ENCODE measurements at regions of chr11 and their contacts with region 1.

Region 1: DNA sequence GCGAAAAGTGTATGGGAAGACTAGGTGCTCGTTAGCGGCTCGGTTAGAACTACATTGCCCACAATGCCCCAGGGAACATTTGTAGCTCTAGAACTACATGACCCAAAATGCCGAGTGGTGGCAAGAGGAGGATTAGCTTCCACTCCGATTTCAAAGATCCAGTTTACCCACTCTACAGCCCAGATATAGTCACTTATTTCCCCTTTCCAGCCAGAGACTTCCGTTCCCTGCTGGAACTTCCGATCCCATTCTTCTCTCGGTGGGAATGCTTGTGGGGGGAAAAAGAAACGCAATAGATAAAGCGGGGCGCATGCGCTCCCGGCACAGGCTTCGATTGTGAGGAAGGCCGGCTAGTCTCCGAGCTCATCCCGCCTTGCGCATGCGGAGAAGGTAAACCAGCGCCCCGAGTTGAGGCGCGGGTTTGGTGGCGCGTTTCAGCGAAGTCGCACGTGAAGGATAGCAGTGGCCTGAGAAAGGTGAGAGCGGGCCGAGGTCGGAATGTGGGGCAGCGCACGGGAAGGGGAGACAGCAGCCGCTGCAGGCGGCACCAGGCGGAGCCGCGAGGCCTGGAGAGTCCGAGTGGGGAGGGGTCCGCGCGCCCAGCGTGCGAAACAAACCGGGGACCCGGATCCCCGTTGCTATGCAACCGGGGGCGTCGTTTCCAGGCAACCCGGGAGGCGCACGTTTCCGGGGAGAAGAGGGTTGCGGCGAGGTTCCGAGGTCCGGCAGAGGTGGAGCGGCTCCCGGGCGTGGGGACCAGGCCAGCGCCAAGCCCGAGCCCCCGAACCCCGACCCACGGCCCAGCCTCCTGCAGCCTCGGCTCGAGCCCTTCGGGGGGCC is at the start of gene TMEM109:
- DNase-seq: peak; percentile 80
- ATAC-seq: peak; percentile 54
- H3K4me3 Mint-ChIP-seq: peak within 1 kb of the TSS; percentile 98
- H3K27ac Mint-ChIP-seq: peak within 1 kb of the TSS; percentile 99
- H3K4me1 Mint-ChIP-seq: peaks cover 87% of the 10 kb centered on the region
- H3K27me3 Mint-ChIP-seq: no peaks in the 10 kb centered on the region
- CTCF ChIP-seq: no peak
- total RNA-seq, gene TMEM109: 117 and 121 TPM in 2 replicates

Region 2: GRCh38 chr11:60841797-60842667 is 72.0 kb before region 1 on chr11 and contains the start of gene CCDC86:
- CTCF ChIA-PET with region 1: no interaction called
- POLR2A ChIA-PET with region 1: no interaction called
- intact Hi-C with region 1: loop called (anchors 1 kb)
- DNase-seq: peak; percentile 100
- ATAC-seq: peak; percentile 96
- H3K4me3 Mint-ChIP-seq: peak within 1 kb of the TSS; percentile 83
- H3K27ac Mint-ChIP-seq: peak within 1 kb of the TSS; percentile 85
- H3K4me1 Mint-ChIP-seq: peaks cover 41% of the 10 kb centered on the region
- H3K27me3 Mint-ChIP-seq: no peaks in the 10 kb centered on the region
- CTCF ChIP-seq: no peak
- total RNA-seq, gene CCDC86: 30.3 and 30.6 TPM in 2 replicates

Region 3: DNA sequence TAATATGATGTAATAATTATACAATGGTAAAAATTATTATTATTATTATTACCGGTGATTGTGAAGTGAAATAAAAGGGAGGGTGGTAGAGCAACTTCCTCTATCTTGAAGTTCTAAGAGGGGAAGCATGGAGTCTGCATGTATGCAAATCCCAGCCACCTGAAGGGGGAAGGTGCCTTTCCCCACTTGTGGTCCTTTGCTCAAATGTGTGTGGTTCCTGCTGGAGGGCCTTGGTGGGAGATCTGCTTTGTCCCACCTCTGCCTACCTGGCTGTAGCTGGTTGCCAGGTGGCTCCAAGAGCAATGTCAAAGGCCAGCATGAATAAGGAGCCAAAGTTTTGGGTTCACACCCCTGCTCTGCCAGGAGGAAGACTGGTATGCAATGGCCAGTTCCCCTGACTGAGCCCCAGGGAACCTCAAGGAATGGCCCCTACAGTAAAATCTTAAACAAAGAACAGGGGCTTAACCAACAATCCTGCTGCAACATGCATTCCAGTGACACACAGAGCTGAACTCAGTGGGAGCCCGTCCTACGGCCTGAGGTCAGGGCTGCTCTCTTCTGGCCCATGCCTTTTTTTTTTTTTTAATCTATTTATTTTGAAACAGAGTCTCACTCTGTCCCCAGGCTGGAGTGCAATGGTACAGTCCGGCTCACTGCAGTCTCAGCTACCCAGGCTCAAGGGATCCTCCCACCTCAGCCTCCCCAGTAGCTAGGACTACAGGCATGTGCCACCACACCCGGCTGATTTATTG is 18.8 kb after region 1 on chr11:
- CTCF ChIA-PET with region 1: interaction called, 33 read pairs
- POLR2A ChIA-PET with region 1: interaction called, 191 read pairs
- intact Hi-C with region 1: loop called (anchors 1 kb)
- DNase-seq: no peak
- ATAC-seq: peak; percentile 57
- H3K4me3 Mint-ChIP-seq: peak overlapping the region; percentile 66
- H3K27ac Mint-ChIP-seq: peak overlapping the region; percentile 89
- H3K4me1 Mint-ChIP-seq: peaks cover 48% of the 10 kb centered on the region
- H3K27me3 Mint-ChIP-seq: no peaks in the 10 kb centered on the region
- CTCF ChIP-seq: no peak

Region 4: GRCh38 chr11:60970369-60970774 is 56.4 kb after region 1 on chr11:
- CTCF ChIA-PET with region 1: interaction called, 38 read pairs
- POLR2A ChIA-PET with region 1: interaction called, 9 read pairs
- intact Hi-C with region 1: loop called (anchors 1 kb)
- DNase-seq: peak; percentile 68
- ATAC-seq: peak; percentile 91
- H3K4me3 Mint-ChIP-seq: no peak overlapping the region
- H3K27ac Mint-ChIP-seq: peak overlapping the region; percentile 32
- H3K4me1 Mint-ChIP-seq: peaks cover 31% of the 10 kb centered on the region
- H3K27me3 Mint-ChIP-seq: no peaks in the 10 kb centered on the region
- CTCF ChIP-seq: peak; percentile 88

Region 5: GRCh38 chr11:61061081-61061826 is 147.2 kb after region 1 on chr11:
- CTCF ChIA-PET with region 1: no interaction called
- POLR2A ChIA-PET with region 1: interaction called, 14 read pairs
- intact Hi-C with region 1: loop called (anchors 1 kb)
- DNase-seq: peak; percentile 45
- ATAC-seq: peak; percentile 88
- H3K4me3 Mint-ChIP-seq: peak overlapping the region; percentile 75
- H3K27ac Mint-ChIP-seq: peak overlapping the region; percentile 95
- H3K4me1 Mint-ChIP-seq: peaks cover 40% of the 10 kb centered on the region
- H3K27me3 Mint-ChIP-seq: no peaks in the 10 kb centered on the region
- CTCF ChIP-seq: no peak

Region 6: DNA sequence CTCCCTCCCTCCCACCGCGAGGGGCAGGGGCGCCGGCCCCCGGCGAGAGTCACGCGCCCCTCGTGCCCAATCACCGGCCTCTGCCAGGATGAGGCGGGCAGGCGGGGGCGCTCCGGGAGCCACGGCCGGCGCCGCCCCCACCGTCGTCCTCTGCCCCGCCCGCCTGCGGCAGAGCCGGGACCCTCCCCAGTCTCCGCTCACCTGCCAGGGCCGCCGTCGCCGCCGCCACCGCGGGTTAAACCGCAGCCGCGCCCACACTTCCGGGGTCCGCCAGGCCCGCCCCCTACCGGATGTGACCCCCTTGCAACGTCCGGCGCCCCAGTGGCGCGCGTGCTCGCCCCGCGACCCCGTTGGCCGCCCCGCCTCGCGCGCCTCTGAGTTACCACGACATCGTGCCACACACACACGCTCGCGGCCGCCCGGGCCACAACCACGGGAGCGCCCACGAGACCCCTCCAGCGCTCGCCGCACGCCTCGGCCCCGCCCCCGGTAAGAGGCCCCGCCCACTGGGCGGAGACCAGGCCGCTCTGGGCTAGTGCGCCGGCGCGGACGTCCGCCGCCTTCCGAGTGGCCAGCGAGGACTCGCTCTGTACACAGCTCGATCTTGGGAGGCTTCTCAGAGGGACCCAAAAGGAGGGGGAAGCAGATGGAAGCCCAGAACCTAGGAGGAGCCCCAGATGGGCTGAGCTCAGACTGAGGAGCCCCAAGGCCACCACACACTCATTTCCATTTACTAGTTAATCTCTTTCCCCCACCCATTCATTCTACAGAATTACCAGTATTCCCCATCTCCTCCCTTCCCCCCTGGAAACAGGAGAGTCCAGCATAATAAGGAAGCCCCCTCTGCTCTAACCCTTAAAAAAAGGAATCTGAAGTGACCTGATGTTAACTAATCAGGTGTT is 247.4 kb after region 1 on chr11 and contains the start of gene VPS37C:
- CTCF ChIA-PET with region 1: interaction called, 3 read pairs
- POLR2A ChIA-PET with region 1: interaction called, 5 read pairs
- intact Hi-C with region 1: loop called (anchors 1 kb)
- DNase-seq: peak; percentile 98
- ATAC-seq: peak; percentile 77
- H3K4me3 Mint-ChIP-seq: peak within 1 kb of the TSS; percentile 93
- H3K27ac Mint-ChIP-seq: peak within 1 kb of the TSS; percentile 97
- H3K4me1 Mint-ChIP-seq: peaks cover 65% of the 10 kb centered on the region
- H3K27me3 Mint-ChIP-seq: no peaks in the 10 kb centered on the region
- CTCF ChIP-seq: no peak
- total RNA-seq, gene VPS37C: 14.4 and 18.1 TPM in 2 replicates

Region 7: GRCh38 chr11:61429691-61430582 is 515.9 kb after region 1 on chr11 and contains the starts of genes CPSF7 and SDHAF2:
- CTCF ChIA-PET with region 1: no interaction called
- POLR2A ChIA-PET with region 1: no interaction called
- intact Hi-C with region 1: loop called (anchors 5 kb)
- DNase-seq: peak; percentile 99
- ATAC-seq: peak; percentile 83
- H3K4me3 Mint-ChIP-seq: peak within 1 kb of the TSS; percentile 99
- H3K27ac Mint-ChIP-seq: peak within 1 kb of the TSS; percentile 99
- H3K4me1 Mint-ChIP-seq: peaks cover 59% of the 10 kb centered on the region
- H3K27me3 Mint-ChIP-seq: no peaks in the 10 kb centered on the region
- CTCF ChIP-seq: no peak
- total RNA-seq, gene CPSF7: 109 and 124 TPM in 2 replicates
- total RNA-seq, gene SDHAF2: 51.0 and 51.9 TPM in 2 replicates

Region 8: GRCh38 chr11:61659414-61660209 is 745.6 kb after region 1 on chr11:
- CTCF ChIA-PET with region 1: no interaction called
- POLR2A ChIA-PET with region 1: no interaction called
- intact Hi-C with region 1: no loop called
- DNase-seq: no peak
- ATAC-seq: no peak
- H3K4me3 Mint-ChIP-seq: no peak overlapping the region
- H3K27ac Mint-ChIP-seq: no peak overlapping the region
- H3K4me1 Mint-ChIP-seq: no peaks in the 10 kb centered on the region
- H3K27me3 Mint-ChIP-seq: peaks cover 4% of the 10 kb centered on the region
- CTCF ChIP-seq: no peak